PC-9 (cell line): ENCODE measurements at regions of chr9 and their contacts with region 1.

Region 1: GRCh38 chr9:114487607-114488300 is 17.5 kb downstream of the WHRN start:
- DNase-seq: peak; percentile 66 to 71
- H3K4me3 ChIP-seq: no peak overlapping the region
- H3K27ac ChIP-seq: no peak overlapping the region
- H3K4me1 ChIP-seq: peaks cover 37% of the 10 kb centered on the region
- H3K27me3 ChIP-seq: no peaks in the 10 kb centered on the region
- CTCF ChIP-seq: peak; percentile 93

Region 2: GRCh38 chr9:114348906-114349482 is 138.8 kb before region 1 on chr9:
- CTCF ChIA-PET with region 1: no interaction called
- POLR2A ChIA-PET with region 1: no interaction called
- intact Hi-C with region 1: loop called (anchors 10 kb)
- DNase-seq: peak; percentile 79 to 91
- H3K4me3 ChIP-seq: no peak overlapping the region
- H3K27ac ChIP-seq: peak overlapping the region; percentile 83
- H3K4me1 ChIP-seq: peaks cover 15% of the 10 kb centered on the region
- H3K27me3 ChIP-seq: no peaks in the 10 kb centered on the region
- CTCF ChIP-seq: no peak

Region 3: DNA sequence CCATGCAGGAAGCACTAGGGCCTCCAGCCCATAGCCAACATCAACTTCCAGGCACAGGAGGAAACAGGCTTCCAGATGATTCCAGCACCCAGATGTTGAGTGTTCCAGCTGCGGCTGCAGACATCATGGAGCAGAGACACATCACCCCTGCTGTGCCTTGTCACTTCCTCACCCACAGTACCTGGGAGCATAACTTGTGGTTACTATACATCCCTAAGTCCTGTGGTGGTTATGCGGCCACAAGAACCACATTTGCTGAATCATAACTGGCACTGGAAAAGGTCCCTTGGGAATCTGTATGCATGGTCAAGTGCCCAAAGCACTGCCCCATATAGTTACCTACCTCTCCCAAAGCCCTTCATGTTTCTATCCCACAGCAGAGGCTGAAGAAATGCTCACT is 39.0 kb before region 1 on chr9:
- CTCF ChIA-PET with region 1: no interaction called
- POLR2A ChIA-PET with region 1: no interaction called
- intact Hi-C with region 1: loop called (anchors 5 kb)
- DNase-seq: peak in 1 of 2 experiments; percentile 8
- H3K4me3 ChIP-seq: no peak overlapping the region
- H3K27ac ChIP-seq: no peak overlapping the region
- H3K4me1 ChIP-seq: peaks cover 9% of the 10 kb centered on the region; the same call in 1 of the 2 replicates
- H3K27me3 ChIP-seq: no peaks in the 10 kb centered on the region
- CTCF ChIP-seq: no peak

Region 4: GRCh38 chr9:114505187-114506081 is 17.7 kb after region 1 on chr9 and contains the start of gene WHRN:
- CTCF ChIA-PET with region 1: interaction called, 3 read pairs
- POLR2A ChIA-PET with region 1: interaction called, 6 read pairs
- intact Hi-C with region 1: loop called (anchors 1 kb)
- DNase-seq: peak; percentile 79 to 96
- H3K4me3 ChIP-seq: peak within 1 kb of the TSS; percentile 82
- H3K27ac ChIP-seq: no peak within 1 kb of the TSS
- H3K4me1 ChIP-seq: peaks cover 35% of the 10 kb centered on the region
- H3K27me3 ChIP-seq: peaks cover 9% of the 10 kb centered on the region; the same call in 1 of the 2 replicates
- CTCF ChIP-seq: no peak
- total RNA-seq, gene WHRN: 19.8 and 21.9 TPM in 2 replicates

Region 5: GRCh38 chr9:114587385-114588202 is 99.8 kb after region 1 on chr9 and contains the start of gene ATP6V1G1:
- CTCF ChIA-PET with region 1: interaction called, 3 read pairs
- POLR2A ChIA-PET with region 1: interaction called, 4 read pairs
- intact Hi-C with region 1: loop called (anchors 1 kb)
- DNase-seq: peak; percentile 97 to 99
- H3K4me3 ChIP-seq: peak within 1 kb of the TSS; percentile 78
- H3K27ac ChIP-seq: peak within 1 kb of the TSS; percentile 82
- H3K4me1 ChIP-seq: peaks cover 20% of the 10 kb centered on the region
- H3K27me3 ChIP-seq: no peaks in the 10 kb centered on the region
- CTCF ChIP-seq: no peak
- total RNA-seq, gene ATP6V1G1: 81.9 and 90.6 TPM in 2 replicates

Region 6: DNA sequence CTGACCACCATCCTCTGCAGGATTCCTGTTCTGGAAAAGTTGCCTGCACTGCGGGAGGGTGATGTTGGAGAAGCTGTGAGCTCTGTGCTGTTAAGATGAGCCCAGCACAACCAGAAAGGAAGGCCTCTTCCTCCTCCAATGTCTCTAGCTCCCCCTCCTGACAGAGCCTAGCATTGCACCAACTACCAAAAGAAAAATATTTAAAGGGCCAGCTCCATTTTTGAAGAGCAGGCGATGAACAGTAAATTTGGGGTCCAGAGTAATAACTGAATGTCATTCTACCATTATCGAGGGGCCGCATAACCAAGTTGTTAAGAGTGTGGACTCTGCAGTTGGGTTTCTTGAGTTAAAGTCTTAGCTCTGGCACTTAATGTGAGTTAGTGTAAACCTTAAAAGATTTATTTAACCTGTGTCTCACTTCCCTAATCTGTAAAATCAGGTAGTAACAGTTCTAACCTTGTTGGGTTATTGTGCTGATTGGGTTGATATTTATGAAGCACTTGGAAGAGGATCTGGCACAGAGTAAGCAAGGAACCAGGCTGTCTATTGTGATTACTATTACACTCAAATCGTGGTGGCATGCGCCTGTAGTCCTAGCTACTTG is 165.9 kb after region 1 on chr9:
- CTCF ChIA-PET with region 1: interaction called, 8 read pairs
- POLR2A ChIA-PET with region 1: no interaction called
- intact Hi-C with region 1: loop called (anchors 1 kb)
- DNase-seq: peak; percentile 60 to 79
- H3K4me3 ChIP-seq: no peak overlapping the region
- H3K27ac ChIP-seq: no peak overlapping the region
- H3K4me1 ChIP-seq: no peaks in the 10 kb centered on the region
- H3K27me3 ChIP-seq: no peaks in the 10 kb centered on the region
- CTCF ChIP-seq: peak; percentile 93